GM12878 (cell line): ENCODE measurements at regions of chr15 and their contacts with region 1.

Region 1: GRCh38 chr15:95409626-95410310 is 920.7 kb upstream of the NR2F2 start:
- DNase-seq: no peak
- ATAC-seq: peak; percentile 59
- H3K4me3 ChIP-seq: no peak overlapping the region
- H3K27ac ChIP-seq: no peak overlapping the region
- H3K4me1 ChIP-seq: no peaks in the 10 kb centered on the region
- H3K27me3 ChIP-seq: no peaks in the 10 kb centered on the region
- CTCF ChIP-seq: no peak
- EP300 ChIP-seq: no peak
- POLR2A ChIP-seq: no peak
- RAD21 ChIP-seq: no peak

Region 2: DNA sequence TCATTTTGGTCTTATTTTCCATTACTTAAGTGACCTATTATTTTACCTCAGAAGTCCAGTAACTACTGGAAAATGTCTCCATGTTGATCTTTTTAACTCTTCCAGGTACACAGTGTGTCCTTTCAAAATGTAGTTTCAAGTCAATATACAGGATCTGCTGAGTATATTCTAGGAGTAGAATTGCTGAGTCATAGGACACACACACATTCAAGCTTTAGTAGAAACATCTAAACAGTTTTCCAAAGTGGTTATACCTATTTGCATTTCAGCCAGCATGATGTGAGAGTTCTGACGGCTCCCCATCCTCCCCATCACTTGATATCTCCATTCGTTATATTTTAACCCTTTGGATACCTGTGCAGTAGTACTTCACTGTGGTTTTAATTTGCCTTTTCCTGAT is 906.5 kb before region 1 on chr15:
- CTCF ChIA-PET with region 1: no interaction called
- POLR2A ChIA-PET with region 1: no interaction called
- RAD21 ChIA-PET with region 1: no interaction called
- SMC1A ChIA-PET with region 1: no interaction called
- in situ Hi-C with region 1: no loop called
- intact Hi-C with region 1: no loop called
- DNase-seq: no peak
- ATAC-seq: no peak
- H3K4me3 ChIP-seq: no peak overlapping the region
- H3K27ac ChIP-seq: no peak overlapping the region
- H3K4me1 ChIP-seq: no peaks in the 10 kb centered on the region
- H3K27me3 ChIP-seq: no peaks in the 10 kb centered on the region
- CTCF ChIP-seq: no peak
- EP300 ChIP-seq: no peak
- POLR2A ChIP-seq: no peak
- RAD21 ChIP-seq: no peak

Region 3: GRCh38 chr15:95350908-95351307 is 58.9 kb before region 1 on chr15:
- CTCF ChIA-PET with region 1: interaction called, 4 read pairs
- POLR2A ChIA-PET with region 1: no interaction called
- RAD21 ChIA-PET with region 1: interaction called, 4 read pairs
- SMC1A ChIA-PET with region 1: interaction called, 10 read pairs
- in situ Hi-C with region 1: no loop called
- intact Hi-C with region 1: no loop called
- DNase-seq: peak; percentile 9
- ATAC-seq: peak; percentile 83
- H3K4me3 ChIP-seq: no peak overlapping the region
- H3K27ac ChIP-seq: no peak overlapping the region
- H3K4me1 ChIP-seq: no peaks in the 10 kb centered on the region
- H3K27me3 ChIP-seq: no peaks in the 10 kb centered on the region
- CTCF ChIP-seq: peak in 1 of 3 experiments; percentile 8; a peak in 1 of 6 replicates
- EP300 ChIP-seq: peak in 1 of 2 experiments; percentile 59; a peak in 1 of 4 replicates
- POLR2A ChIP-seq: no peak
- RAD21 ChIP-seq: no peak